ENCODE measurements at regions of chr1 and their contacts with region 1.

Region 1: DNA sequence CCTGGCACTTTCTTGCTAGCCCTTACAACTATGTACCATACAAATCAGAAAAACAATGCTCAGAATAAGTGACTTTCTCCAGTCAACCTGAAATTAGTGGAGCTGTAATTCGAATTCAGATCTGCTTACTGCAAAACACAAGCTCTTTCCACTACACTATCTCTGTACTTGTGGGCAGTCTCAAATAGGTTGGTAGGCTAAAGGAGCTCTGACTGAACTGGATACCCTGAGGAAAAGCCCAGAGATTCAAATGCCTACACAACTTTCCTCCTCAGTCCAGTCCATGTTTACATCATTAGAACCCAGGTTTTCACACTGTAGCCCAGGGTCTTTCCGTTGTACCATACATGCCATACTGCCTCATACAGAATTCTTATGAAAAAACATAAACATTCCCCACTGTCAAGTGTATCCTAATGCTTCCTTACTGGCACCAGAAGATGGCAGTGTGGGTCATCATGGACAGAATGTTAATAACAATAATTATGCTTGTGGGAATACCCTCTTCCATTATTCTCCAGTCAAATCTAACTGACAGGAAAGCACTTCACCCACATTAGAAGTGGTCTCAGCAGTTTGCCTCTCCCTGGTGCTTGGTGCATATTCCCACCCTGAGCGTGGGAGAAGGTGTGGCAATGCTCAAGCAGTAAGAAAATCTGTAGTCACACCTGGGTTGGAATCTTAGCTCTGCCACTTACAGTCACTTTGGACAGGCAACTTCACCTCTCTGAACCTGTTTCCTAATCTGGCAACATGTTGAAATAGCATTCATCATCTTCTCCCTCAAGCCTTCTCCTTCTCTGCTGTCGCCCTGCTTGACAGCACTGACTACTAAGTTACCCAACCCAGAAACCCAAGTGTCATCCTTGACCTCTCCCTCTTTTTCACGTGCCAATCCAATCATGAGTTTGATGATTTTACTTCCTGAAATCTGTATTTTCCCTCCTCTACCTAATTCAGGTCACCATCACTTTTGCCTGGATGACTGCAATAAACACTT is 14.4 kb upstream of the ZFYVE9 start:
- DNase-seq: peak; percentile 71
- ATAC-seq: peak; percentile 99
- H3K4me3 ChIP-seq: no peak overlapping the region
- H3K27ac ChIP-seq: no peak overlapping the region
- H3K4me1 ChIP-seq: no peaks in the 10 kb centered on the region
- H3K27me3 ChIP-seq: peaks cover 4% of the 10 kb centered on the region; the same call in 1 of the 2 replicates
- CTCF ChIP-seq: peak; percentile 86

Region 2: GRCh38 chr1:52296345-52296744 is 168.9 kb after region 1 on chr1:
- CTCF ChIA-PET with region 1: no interaction called
- POLR2A ChIA-PET with region 1: no interaction called
- intact Hi-C with region 1: loop called (anchors 1 kb)
- DNase-seq: peak; percentile 76
- ATAC-seq: peak; percentile 90
- H3K4me3 ChIP-seq: no peak overlapping the region
- H3K27ac ChIP-seq: no peak overlapping the region
- H3K4me1 ChIP-seq: no peaks in the 10 kb centered on the region
- H3K27me3 ChIP-seq: no peaks in the 10 kb centered on the region
- CTCF ChIP-seq: peak; percentile 86

Region 3: GRCh38 chr1:52348704-52349300 is 221.3 kb after region 1 on chr1:
- CTCF ChIA-PET with region 1: no interaction called
- POLR2A ChIA-PET with region 1: no interaction called
- intact Hi-C with region 1: loop called (anchors 5 kb)
- DNase-seq: peak; percentile 11
- ATAC-seq: peak; percentile 40; the same call in 1 of the 2 replicates
- H3K4me3 ChIP-seq: no peak overlapping the region
- H3K27ac ChIP-seq: no peak overlapping the region
- H3K4me1 ChIP-seq: peaks cover 13% of the 10 kb centered on the region; the same call in 1 of the 2 replicates
- H3K27me3 ChIP-seq: no peaks in the 10 kb centered on the region
- CTCF ChIP-seq: peak; percentile 37; the same call in 1 of the 2 replicates

Region 4: DNA sequence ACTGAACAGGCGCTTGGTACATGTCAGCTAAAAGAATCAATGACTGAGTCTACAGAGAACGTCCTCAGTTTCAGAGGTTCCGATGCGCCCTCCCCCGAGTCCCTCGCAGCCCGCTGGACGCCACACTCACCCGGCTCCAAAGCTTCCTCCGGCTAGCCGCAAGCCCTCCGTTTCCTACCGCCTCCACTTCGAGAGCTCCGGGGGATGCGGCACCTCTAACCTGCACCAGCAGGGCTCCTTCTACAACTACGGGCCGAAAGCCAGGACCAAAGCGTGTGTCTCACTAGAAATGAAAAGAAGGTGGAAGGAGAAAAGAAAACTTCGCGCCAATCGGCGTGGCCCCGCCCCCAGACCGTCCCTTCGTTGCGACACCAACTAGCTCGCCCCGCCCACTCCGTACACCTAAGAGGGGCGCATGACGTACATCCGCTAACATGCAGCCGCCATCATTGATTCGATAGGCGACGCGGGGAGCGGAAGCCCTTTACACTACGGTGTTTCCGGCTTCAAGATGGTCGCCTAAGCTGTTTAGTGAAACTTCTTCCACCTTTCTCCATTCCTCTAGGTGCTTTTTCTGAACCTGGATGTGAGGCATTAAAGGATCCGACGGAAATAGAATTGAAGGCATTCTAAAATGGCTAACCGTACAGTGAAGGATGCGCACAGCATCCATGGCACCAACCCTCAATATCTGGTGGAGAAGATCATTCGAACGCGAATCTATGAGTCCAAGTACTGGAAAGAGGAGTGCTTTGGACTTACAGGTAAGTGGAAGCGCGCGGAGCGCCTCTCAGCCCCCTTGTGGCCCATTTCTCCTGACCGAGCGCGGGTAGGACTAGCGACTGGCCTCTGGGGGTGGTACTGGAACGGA is 276.9 kb after region 1 on chr1 and contains the starts of genes ORC1 and PRPF38A:
- CTCF ChIA-PET with region 1: no interaction called
- POLR2A ChIA-PET with region 1: no interaction called
- intact Hi-C with region 1: loop called (anchors 10 kb)
- DNase-seq: peak; percentile 97
- ATAC-seq: peak; percentile 83
- H3K4me3 ChIP-seq: peak within 1 kb of the TSS; percentile 85
- H3K27ac ChIP-seq: peak within 1 kb of the TSS; percentile 76
- H3K4me1 ChIP-seq: peaks cover 35% of the 10 kb centered on the region
- H3K27me3 ChIP-seq: no peaks in the 10 kb centered on the region
- CTCF ChIP-seq: peak; percentile 57
- total RNA-seq, gene ORC1: 23.7 and 28.9 TPM in 2 replicates
- total RNA-seq, gene PRPF38A: 14.5 and 15.2 TPM in 2 replicates

Measured in PC-3 (cell line).